ENCODE measurements at regions of chr3 and their contacts with region 1.

Region 1: DNA sequence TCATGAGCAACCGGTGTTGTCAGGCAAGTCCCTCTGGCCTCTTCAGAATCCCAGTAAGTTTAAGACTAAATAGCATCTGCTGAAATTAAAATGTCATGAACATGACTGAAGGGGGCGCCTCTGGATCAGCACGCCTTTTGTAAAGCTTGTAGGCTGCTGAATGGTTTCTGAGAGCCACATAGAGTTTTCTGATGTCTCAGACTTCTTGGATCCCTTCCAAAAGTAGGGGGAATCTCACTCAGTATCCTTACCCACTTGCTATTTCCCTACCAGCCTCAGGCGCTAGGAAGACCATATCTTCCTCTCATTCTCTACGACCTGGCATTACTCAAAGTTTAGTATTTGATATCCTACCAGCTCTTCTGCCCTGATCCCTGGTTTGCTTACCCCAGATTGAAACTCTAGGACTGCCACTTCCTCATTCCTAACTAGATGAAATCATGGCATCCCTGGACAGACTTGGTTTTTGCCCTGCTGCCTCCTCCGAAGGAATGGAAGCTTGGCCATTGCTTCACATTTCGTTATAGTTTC is 62.7 kb upstream of the CD47 start:
- DNase-seq: peak; percentile 76
- H3K4me3 Mint-ChIP-seq: no peak overlapping the region
- H3K27ac Mint-ChIP-seq: no peak overlapping the region
- H3K4me1 Mint-ChIP-seq: peaks cover 14% of the 10 kb centered on the region
- H3K27me3 Mint-ChIP-seq: no peaks in the 10 kb centered on the region

Region 2: DNA sequence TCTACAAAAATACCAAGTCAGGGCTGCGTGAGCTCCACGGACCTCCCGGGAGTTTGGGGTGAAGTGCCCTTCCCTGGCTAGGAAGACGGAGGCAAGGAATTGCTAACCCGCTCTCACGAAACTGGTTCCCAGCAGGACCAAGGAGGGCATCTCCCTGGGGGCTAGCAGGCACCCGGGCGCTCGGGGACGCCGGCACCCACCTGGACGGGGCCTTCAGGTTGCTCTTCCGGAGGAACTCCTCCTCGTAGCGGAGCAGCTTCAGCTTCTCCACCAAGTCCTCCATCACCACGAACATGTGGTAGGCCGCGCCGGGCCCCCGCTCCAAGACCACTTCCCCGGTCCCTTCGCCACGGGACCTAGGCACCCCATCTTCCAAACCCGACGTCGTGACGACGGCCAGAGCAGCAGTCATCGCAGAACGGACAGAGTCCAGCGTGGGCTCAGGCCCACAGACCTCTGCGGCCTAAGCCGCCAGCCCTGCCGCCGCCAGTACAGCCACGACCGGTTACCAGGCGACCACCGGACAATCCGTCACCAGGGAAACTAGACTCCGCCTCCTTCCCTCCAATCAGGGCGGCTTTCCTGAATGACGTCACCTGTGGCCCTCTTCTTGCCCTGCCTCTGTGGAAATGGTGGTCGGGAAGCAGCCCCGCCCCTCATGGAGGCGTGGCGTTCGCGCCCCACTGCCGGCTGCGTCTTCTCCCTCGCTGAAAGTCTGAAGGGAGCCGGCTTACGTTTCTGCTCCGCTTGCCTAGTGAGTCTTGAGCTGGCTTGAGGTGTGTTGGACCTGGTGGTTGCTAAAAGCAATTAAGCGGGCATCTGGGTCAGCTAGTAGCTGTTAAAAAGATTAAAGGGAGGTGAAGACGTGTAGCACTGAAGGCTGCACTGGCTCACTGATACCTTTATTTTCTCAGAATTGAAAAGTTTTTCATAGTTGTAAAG is 68.7 kb after region 1 on chr3 and contains the start of gene IFT57:
- CTCF ChIA-PET with region 1: interaction called, 15 read pairs
- DNase-seq: peak; percentile 96
- H3K4me3 Mint-ChIP-seq: peak within 1 kb of the TSS; percentile 95
- H3K27ac Mint-ChIP-seq: peak within 1 kb of the TSS; percentile 99
- H3K4me1 Mint-ChIP-seq: peaks cover 55% of the 10 kb centered on the region
- H3K27me3 Mint-ChIP-seq: no peaks in the 10 kb centered on the region

Region 3: DNA sequence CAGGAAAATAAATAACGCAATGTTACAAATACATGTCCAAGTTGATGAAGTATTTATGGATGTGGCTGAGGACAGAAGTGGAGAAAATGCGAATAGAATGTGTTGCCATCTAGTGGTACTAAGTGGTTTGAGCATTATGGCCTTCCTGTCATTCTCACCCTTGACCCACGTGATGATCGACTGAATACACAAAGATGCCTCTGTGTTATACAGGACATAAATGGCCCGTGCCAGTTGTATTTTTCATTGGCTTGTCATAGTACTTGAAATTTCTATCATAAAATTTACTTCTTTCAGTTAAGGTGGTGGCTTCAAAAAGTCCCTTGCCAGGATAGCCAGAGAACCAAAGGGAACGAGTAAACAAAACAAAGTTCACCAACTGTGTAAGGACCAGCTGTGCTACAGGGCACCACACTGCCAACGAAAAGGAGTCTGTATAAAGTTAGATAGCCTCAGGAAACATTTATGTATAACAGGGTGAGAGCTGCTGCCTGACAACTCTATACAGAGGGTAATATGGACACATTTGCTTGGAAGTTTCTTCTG is 253.2 kb after region 1 on chr3:
- CTCF ChIA-PET with region 1: interaction called, 27 read pairs
- DNase-seq: no peak
- H3K4me3 Mint-ChIP-seq: no peak overlapping the region
- H3K27ac Mint-ChIP-seq: no peak overlapping the region
- H3K4me1 Mint-ChIP-seq: peaks cover 13% of the 10 kb centered on the region
- H3K27me3 Mint-ChIP-seq: peaks cover 8% of the 10 kb centered on the region

Region 4: GRCh38 chr3:108437440-108437839 is 283.9 kb after region 1 on chr3:
- CTCF ChIA-PET with region 1: interaction called, 10 read pairs
- DNase-seq: no peak
- H3K4me3 Mint-ChIP-seq: no peak overlapping the region
- H3K27ac Mint-ChIP-seq: no peak overlapping the region
- H3K4me1 Mint-ChIP-seq: no peaks in the 10 kb centered on the region
- H3K27me3 Mint-ChIP-seq: peaks cover 7% of the 10 kb centered on the region

Region 5: GRCh38 chr3:108477511-108478147 is 324.1 kb after region 1 on chr3:
- CTCF ChIA-PET with region 1: interaction called, 59 read pairs
- DNase-seq: peak; percentile 74
- H3K4me3 Mint-ChIP-seq: no peak overlapping the region
- H3K27ac Mint-ChIP-seq: no peak overlapping the region
- H3K4me1 Mint-ChIP-seq: peaks cover 7% of the 10 kb centered on the region
- H3K27me3 Mint-ChIP-seq: peaks cover under 1% of the 10 kb centered on the region

Measured in activated naive CD4-positive, alpha-beta T cell treated with anti-CD3 and anti-CD28 coated beads, Interleukin-2, amount 10 ng/mL, durations not matched to agents 7 days and 5 days (primary cell).